GM13977 (cell line): ENCODE measurements at regions of chr20 and their contacts with region 1.

Region 1: DNA sequence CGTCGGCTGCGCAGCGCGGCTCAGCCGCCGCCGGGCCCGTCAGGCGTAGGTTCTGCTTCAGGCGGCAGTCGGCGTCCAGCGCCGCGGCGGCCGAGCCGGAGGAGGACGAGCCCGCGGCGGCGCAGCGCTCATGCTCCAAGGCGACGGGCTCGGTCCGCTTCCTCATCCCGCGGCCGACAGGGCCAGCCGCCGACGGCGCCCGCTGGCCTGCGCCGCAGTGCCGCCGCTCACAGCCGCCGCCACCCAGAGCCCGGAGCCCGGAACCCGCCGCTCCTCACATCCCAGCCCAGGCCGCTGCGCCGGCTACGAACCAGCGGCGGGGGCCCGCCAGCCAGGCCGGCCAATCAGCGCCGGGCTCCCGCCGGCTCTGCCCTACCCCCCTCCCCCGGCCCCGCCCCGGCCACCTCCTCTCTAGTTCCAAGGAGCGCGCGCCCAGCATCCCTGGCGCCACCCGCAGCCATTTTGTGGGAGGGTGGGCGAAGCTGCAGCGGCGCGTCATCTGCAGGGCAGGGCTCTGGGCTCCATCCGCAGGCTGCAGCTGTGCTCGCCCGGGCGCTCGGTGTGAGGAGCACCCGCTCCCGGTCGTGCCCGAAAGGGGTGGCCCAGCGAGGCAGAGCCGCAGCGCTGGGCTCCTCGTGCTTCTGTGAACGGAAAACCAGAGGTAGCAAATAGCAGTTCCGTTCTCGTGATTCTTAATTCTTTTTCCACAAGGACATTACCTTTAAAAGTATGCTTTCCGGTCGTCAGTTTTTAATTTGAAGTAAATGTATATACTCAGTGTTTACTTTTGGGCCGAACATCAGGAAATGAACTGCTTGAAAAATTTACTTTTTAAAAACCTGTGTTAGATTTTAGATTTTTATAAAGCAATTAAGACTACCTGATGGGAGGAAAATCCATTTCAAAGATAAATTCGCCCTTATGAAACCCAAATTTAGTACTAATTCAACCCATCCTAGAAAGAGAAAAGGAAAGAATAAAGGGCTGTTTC is at the start of gene ABHD12:
- DNase-seq: peak; percentile 97
- CTCF ChIP-seq: peak; percentile 25

Region 2: GRCh38 chr20:25294459-25295385 is 96.1 kb before region 1 on chr20:
- in situ Hi-C with region 1: loop called (anchors 10 kb)
- DNase-seq: peak; percentile 85
- CTCF ChIP-seq: peak; percentile 82

Region 3: DNA sequence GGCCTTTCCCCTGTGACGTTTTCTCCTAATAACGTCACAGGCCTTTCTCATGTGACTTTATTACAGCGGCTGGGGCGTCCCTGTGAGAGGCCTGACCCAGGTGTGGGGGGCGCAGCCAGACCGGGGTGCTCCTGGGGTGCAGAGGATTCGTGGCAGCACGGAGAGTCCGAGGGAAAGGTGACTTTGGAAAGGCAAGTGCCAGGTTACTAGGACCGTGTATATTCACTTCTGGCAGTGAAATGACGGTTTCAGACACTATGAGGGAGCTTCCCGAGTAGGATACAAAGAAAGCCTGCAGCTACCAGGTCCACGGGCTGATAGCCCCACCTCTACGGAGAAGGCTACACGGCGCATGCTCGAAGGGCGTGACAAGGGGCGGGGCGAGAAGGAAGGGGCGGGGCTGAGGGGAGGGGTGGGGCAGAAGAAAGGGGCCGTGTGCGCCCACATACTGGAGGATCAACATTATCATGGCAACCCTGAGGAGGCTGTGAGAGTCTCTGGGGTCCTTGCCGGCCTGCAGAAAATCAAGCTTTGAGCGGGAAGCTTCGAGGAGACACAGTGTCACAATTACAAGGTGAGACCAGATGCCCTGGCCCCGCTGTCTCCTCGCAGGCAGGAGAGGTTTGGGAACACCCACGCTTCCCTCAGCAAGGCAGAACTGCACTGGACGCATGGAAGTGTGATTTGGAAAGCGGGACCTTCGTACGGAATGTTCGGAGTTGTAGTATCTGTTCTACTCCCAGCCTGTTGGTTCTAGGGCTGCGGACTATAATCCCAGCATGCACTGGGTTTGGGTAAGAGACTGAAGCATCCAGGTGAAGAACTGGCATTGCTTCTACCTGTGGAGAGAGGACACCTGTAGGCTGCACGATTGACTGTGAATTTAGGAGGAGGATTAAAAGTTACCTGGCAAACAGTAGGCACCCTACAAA is 360.2 kb after region 1 on chr20:
- in situ Hi-C with region 1: no loop called
- DNase-seq: no peak
- CTCF ChIP-seq: no peak